ENCODE measurements at regions of chr3 and their contacts with region 1.

Region 1: DNA sequence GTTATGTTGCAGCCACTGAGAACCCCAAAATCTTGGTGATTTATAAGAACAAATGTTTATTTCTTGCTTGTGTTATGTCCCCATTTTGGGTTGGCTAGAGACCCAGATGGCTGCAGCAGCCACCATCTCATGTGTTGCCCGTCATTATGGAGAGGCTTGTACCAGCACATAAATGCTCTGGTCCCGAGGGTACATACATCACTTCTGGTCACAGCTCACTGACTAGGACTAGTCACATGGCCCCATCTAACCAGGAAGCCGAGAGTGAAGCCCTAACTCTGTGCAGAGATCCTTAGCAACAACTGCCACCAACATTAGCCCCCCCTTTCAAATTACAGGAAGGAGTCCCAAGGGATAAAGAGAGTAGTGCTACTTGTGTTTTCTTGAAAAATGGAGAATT is 25.5 kb upstream of the HACD2 start:
- DNase-seq: no peak
- H3K4me3 ChIP-seq: no peak overlapping the region
- H3K27ac ChIP-seq: no peak overlapping the region
- H3K27me3 ChIP-seq: no peaks in the 10 kb centered on the region
- CTCF ChIP-seq: no peak

Region 2: DNA sequence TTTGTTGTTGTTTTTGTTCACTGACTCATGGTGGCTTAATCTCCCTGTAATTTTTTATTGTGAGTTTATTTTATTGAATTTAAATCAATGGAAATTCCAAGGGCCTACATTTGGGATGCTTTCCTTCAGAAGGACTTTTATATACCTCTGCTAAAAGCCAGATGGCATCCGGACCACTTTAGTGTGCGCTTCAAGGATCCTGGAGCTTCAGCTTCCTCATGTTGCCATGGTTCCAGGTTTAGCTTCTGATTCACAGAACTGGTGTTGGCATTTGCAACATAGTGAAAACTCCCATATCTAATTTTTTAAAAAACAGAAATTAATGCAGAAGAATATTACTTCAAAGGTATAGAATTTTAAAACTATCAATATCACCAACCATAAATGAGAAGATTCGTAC is 16.9 kb before region 1 on chr3:
- intact Hi-C with region 1: loop called in 1 of 2 experiments (anchors 2 kb)
- DNase-seq: no peak
- H3K4me3 ChIP-seq: no peak overlapping the region
- H3K27ac ChIP-seq: no peak overlapping the region
- H3K27me3 ChIP-seq: no peaks in the 10 kb centered on the region
- CTCF ChIP-seq: peak in 4 of 56 donors; percentile 5 to 23 (median 14)